ENCODE measurements at regions of chr2 and their contacts with region 1.

Region 1: GRCh38 chr2:163752267-163752666 is 16.5 kb upstream of the FIGN start:
- DNase-seq: no peak
- ATAC-seq: no peak
- H3K4me3 ChIP-seq: no peak overlapping the region
- H3K27ac ChIP-seq: no peak overlapping the region
- H3K4me1 ChIP-seq: no peaks in the 10 kb centered on the region
- H3K27me3 ChIP-seq: no peaks in the 10 kb centered on the region
- CTCF ChIP-seq: no peak
- EP300 ChIP-seq: no peak
- POLR2A ChIP-seq: no peak
- RAD21 ChIP-seq: no peak

Region 2: GRCh38 chr2:163253621-163254285 is 498.5 kb before region 1 on chr2:
- CTCF ChIA-PET with region 1: no interaction called
- POLR2A ChIA-PET with region 1: no interaction called
- in situ Hi-C with region 1: no loop called
- intact Hi-C with region 1: no loop called
- DNase-seq: no peak
- ATAC-seq: no peak
- H3K4me3 ChIP-seq: no peak overlapping the region
- H3K27ac ChIP-seq: no peak overlapping the region
- H3K4me1 ChIP-seq: no peaks in the 10 kb centered on the region
- H3K27me3 ChIP-seq: no peaks in the 10 kb centered on the region
- CTCF ChIP-seq: no peak
- EP300 ChIP-seq: no peak
- POLR2A ChIP-seq: no peak
- RAD21 ChIP-seq: no peak

Region 3: DNA sequence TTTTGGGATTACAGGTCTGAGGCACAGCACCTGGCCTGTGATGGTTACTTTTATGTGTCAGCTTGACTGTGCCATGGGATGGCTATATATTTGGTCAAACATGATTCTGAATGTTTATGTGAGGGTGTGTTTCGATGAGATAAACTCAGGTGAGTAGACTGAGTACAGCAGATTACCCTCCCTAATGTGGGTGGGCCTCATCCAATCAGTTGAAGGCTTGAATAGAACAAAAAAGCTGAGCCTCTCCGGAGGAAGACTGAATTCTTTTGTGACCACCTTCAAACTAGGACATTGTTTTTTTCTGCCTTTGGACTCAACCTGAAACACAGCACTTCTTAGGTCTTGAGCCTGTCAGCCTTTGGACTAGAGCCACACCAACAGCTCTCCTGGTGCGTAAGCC is 32.9 kb after region 1 on chr2:
- CTCF ChIA-PET with region 1: no interaction called
- POLR2A ChIA-PET with region 1: no interaction called
- in situ Hi-C with region 1: no loop called
- intact Hi-C with region 1: loop called (anchors 1 kb)
- DNase-seq: no peak
- ATAC-seq: no peak
- H3K4me3 ChIP-seq: no peak overlapping the region
- H3K27ac ChIP-seq: no peak overlapping the region
- H3K4me1 ChIP-seq: peaks cover 3% of the 10 kb centered on the region
- H3K27me3 ChIP-seq: no peaks in the 10 kb centered on the region
- CTCF ChIP-seq: no peak
- EP300 ChIP-seq: no peak
- POLR2A ChIP-seq: no peak
- RAD21 ChIP-seq: no peak

Region 4: DNA sequence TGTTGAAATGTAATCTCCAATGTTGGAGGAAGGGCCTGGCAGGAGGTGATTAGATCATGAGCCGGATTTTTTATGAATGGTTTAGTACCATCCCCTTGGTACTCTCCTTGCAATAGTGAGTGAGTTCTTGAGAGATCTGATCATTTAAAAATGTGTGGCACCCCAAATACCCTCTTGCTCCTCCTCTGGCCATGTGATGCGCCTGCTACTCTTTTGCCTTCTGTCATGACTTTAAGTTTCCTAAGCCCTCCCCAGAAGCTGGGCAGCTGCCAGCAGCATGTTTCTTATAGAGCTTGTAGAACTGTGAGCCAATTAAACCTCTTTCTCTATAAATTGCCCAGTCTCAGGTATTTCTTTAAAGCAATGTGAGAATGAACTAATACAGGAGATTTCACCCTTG is 56.1 kb after region 1 on chr2:
- CTCF ChIA-PET with region 1: no interaction called
- POLR2A ChIA-PET with region 1: no interaction called
- in situ Hi-C with region 1: no loop called
- intact Hi-C with region 1: no loop called
- DNase-seq: no peak
- ATAC-seq: no peak
- H3K4me3 ChIP-seq: no peak overlapping the region
- H3K27ac ChIP-seq: no peak overlapping the region
- H3K4me1 ChIP-seq: no peaks in the 10 kb centered on the region
- H3K27me3 ChIP-seq: no peaks in the 10 kb centered on the region
- CTCF ChIP-seq: no peak
- EP300 ChIP-seq: no peak
- POLR2A ChIP-seq: no peak
- RAD21 ChIP-seq: no peak

Region 5: DNA sequence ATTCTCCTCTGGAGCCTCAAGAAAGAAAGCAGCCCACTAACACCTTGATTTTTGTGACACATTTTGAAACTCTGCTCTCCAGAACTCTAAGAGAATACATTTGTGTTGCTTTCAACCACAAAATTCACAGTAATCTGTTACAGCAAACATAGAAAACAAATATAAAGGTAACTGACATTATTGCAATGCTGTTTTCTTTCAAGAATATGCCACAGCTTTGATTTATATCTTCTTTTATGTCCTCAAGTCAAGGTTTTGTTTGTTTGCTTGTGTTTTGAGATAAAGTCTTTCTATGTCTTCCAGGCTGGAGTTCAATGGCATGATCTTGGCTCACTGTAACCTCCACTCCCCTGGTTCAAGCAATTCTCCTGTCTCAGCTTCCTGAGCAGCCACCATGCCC is 86.7 kb after region 1 on chr2:
- CTCF ChIA-PET with region 1: no interaction called
- POLR2A ChIA-PET with region 1: no interaction called
- in situ Hi-C with region 1: no loop called
- intact Hi-C with region 1: no loop called
- DNase-seq: no peak
- ATAC-seq: no peak
- H3K4me3 ChIP-seq: no peak overlapping the region
- H3K27ac ChIP-seq: no peak overlapping the region
- H3K4me1 ChIP-seq: no peaks in the 10 kb centered on the region
- H3K27me3 ChIP-seq: no peaks in the 10 kb centered on the region
- CTCF ChIP-seq: no peak
- EP300 ChIP-seq: no peak
- POLR2A ChIP-seq: no peak
- RAD21 ChIP-seq: no peak

Measured in HepG2 (cell line).